CD4-positive, alpha-beta memory T cell (primary cell): ENCODE measurements at regions of chrX and their contacts with region 1.

Region 1: DNA sequence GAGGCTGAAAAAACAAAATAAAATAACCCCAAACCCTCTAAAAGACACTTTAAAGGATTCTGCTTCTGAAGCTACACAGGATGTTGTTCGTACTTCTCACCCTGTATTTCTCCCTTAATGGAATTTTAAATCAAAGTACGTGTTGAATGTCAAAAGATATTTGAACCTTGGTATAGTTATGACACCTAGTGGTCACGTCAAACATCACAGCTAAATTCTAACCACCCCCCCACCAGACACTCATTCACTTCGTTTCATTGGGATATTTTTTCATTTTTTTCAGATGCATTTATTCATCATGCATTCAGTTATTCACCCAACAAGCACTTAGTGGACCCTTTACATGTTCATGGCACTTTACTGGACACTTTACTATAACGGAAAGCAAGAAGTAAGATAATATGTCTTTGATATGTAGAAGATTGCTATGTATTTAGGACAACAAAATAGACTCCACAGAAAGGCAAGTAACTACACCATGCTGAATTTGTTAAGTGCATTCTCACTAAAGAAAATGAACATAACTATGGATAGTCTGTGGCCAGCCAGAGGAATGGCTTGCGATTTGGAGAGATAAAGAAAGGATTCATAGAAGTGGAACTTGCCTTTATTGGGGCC is 62.5 kb upstream of the GPR174 start:
- DNase-seq: peak; percentile 43 to 72 (median 65)
- H3K4me3 ChIP-seq: peak overlapping the region; percentile 6 to 32
- H3K4me3 Mint-ChIP-seq: peak overlapping the region; percentile 51 to 82 (median 78)
- H3K27ac ChIP-seq: peak overlapping the region; percentile 31
- H3K27ac Mint-ChIP-seq: peak overlapping the region; percentile 77 to 94 (median 90)
- H3K4me1 ChIP-seq: peaks cover 40% of the 10 kb centered on the region
- H3K4me1 Mint-ChIP-seq: peaks cover 16 to 37% (median 25%) of the 10 kb centered on the region in 4 donors
- H3K27me3 ChIP-seq: no peaks in the 10 kb centered on the region
- H3K27me3 Mint-ChIP-seq: no peaks in the 10 kb centered on the region

Region 2: DNA sequence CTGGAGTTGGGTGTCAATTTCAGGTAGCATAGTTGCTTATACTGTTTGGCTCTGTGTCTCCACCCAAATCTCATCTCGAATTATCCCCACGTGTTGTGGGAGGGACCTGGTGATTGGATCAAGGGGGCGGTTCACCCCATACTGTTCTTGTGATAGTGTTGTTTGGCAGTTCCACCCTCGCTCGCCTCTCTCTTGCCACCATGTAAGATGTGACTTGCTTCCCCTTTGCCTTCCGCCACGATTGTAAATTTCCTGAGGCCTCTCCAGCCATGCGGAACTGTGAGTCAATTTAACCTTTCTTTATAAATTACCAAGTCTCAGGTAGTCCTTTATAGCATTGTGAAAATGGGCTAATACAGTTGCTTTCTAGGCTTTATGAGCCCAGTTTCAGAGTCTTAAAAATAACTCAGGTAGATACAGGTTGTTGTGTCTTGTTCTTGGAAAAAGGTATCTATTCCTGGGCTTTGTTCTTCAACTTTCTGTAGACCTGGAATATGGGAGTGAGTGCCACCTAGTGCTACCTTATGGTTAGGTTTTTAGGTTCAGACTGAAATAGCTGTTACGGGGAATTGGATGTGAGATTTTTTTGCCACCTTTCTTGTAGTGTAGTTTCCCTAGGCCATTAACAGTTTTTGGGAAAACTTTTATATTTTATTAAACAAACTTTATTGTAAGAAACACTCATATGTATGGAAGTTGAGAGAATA is 962.3 kb before region 1 on chrX:
- CTCF ChIA-PET with region 1: no interaction called
- POLR2A ChIA-PET with region 1: no interaction called
- intact Hi-C with region 1: loop called (anchors 5 kb)
- DNase-seq: no peak
- H3K4me3 ChIP-seq: no peak overlapping the region
- H3K4me3 Mint-ChIP-seq: peak overlapping the region in 1 of 8 donors; percentile 24
- H3K27ac ChIP-seq: no peak overlapping the region
- H3K27ac Mint-ChIP-seq: peak overlapping the region in 6 of 7 donors; percentile 24 to 72 (median 40)
- H3K4me1 ChIP-seq: peaks cover 32% of the 10 kb centered on the region
- H3K4me1 Mint-ChIP-seq: peaks cover 11 to 44% (median 29%) of the 10 kb centered on the region in 4 donors
- H3K27me3 ChIP-seq: no peaks in the 10 kb centered on the region
- H3K27me3 Mint-ChIP-seq: no peaks in the 10 kb centered on the region

Region 3: DNA sequence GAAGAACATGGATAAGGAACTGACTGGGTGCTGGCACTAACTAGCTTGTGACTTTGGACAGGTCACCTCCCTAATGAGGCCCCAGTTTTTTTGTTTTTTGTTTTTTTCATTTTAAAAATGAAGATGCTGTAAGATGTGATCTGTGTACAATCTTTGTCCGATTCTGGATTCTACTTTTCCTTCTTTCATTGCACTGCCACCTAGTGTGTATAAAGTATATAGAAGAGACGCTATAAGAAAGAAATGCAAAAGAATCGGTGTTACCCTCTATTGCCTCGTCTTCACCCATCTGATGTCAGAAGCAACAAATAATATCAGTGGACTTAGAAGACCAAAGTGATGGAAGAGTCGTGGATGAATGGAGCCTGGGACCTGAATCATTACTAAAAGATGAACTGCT is 195.5 kb before region 1 on chrX:
- CTCF ChIA-PET with region 1: interaction called, 4 read pairs
- POLR2A ChIA-PET with region 1: no interaction called
- intact Hi-C with region 1: loop called (anchors 1 kb)
- DNase-seq: peak in 4 of 5 donors; percentile 5 to 27 (median 10)
- H3K4me3 ChIP-seq: no peak overlapping the region
- H3K4me3 Mint-ChIP-seq: peak overlapping the region in 1 of 8 donors; percentile 50
- H3K27ac ChIP-seq: no peak overlapping the region
- H3K27ac Mint-ChIP-seq: peak overlapping the region in 2 of 7 donors; percentile 43 to 59
- H3K4me1 ChIP-seq: no peaks in the 10 kb centered on the region
- H3K4me1 Mint-ChIP-seq: peaks cover 4 to 10% (median 6%) of the 10 kb centered on the region in 4 donors
- H3K27me3 ChIP-seq: no peaks in the 10 kb centered on the region
- H3K27me3 Mint-ChIP-seq: no peaks in the 10 kb centered on the region

Region 4: DNA sequence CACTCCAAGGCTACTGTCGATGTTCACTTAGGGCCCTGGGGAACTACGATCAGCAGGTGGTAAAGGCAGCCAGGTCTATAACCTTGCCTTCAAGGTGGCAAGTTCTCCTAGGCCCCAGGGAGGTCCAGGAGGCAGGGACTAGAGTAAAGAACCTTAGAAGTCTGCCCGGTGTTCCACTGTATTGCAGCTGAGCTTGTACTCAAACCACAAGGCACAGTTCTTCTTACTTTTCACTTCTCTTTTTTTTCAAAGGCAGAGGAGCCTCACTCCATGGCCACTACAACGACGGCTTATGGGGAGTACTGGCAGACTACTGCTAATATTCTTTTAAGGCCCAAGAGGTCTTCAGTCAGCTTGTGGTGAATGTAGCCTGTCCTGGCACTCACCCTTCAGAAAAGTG is 16.3 kb before region 1 on chrX:
- CTCF ChIA-PET with region 1: no interaction called
- POLR2A ChIA-PET with region 1: no interaction called
- intact Hi-C with region 1: no loop called
- DNase-seq: no peak
- H3K4me3 ChIP-seq: no peak overlapping the region
- H3K4me3 Mint-ChIP-seq: no peak overlapping the region
- H3K27ac ChIP-seq: no peak overlapping the region
- H3K27ac Mint-ChIP-seq: no peak overlapping the region
- H3K4me1 ChIP-seq: no peaks in the 10 kb centered on the region
- H3K4me1 Mint-ChIP-seq: no peaks in the 10 kb centered on the region
- H3K27me3 ChIP-seq: no peaks in the 10 kb centered on the region
- H3K27me3 Mint-ChIP-seq: no peaks in the 10 kb centered on the region

Region 5: DNA sequence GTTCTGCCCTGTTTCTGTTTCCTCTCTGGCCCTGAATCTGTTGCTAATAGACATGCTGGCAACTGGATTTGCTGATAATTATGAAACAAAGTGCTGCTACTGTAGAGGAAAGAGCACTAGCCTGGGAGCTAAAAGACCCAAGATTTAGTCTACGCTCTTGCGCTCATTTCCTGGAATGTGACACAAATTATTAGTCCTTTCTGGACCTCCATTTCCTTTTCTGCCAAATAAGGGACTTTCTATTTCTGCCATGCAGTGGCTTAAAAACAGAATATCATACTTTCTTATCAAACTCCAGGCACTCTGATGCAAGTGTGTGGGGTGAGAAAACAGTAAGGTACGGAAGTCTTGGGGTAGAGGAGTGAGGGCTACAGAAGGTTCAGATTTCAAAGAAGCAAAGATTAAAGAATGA is 14.1 kb after region 1 on chrX:
- CTCF ChIA-PET with region 1: interaction called, 4 read pairs
- POLR2A ChIA-PET with region 1: interaction called, 14 read pairs
- intact Hi-C with region 1: no loop called
- DNase-seq: peak in 3 of 5 donors; percentile 41 to 45 (median 42)
- H3K4me3 ChIP-seq: peak overlapping the region; percentile 17 to 33
- H3K4me3 Mint-ChIP-seq: peak overlapping the region; percentile 31 to 84 (median 56)
- H3K27ac ChIP-seq: peak overlapping the region; percentile 68
- H3K27ac Mint-ChIP-seq: peak overlapping the region; percentile 83 to 96 (median 91)
- H3K4me1 ChIP-seq: peaks cover 69% of the 10 kb centered on the region
- H3K4me1 Mint-ChIP-seq: peaks cover 31 to 70% (median 52%) of the 10 kb centered on the region in 4 donors
- H3K27me3 ChIP-seq: no peaks in the 10 kb centered on the region
- H3K27me3 Mint-ChIP-seq: no peaks in the 10 kb centered on the region

Region 6: DNA sequence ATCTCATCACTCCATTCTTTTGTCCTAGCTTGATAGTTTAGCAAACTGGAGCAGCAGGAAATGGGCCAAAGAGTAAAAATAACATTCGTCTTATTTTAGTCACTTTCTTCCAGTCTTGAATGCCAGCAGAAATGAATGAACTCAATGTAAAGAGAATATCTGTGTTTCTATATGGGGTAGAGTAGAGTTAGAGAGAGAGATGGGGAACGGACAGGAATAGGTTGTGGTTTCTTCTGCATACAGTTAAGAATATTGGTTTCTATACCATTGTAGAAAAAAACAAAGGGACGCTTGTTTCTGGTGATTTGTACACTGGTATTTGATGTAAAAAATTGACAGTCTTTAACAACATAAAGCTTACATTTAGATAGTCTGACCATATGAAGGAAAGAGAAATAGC is 71.3 kb after region 1 on chrX:
- CTCF ChIA-PET with region 1: interaction called, 7 read pairs
- POLR2A ChIA-PET with region 1: interaction called, 10 read pairs
- intact Hi-C with region 1: no loop called
- DNase-seq: no peak
- H3K4me3 ChIP-seq: peak overlapping the region; percentile 34 to 42
- H3K4me3 Mint-ChIP-seq: peak overlapping the region; percentile 57 to 93 (median 84)
- H3K27ac ChIP-seq: peak overlapping the region; percentile 71
- H3K27ac Mint-ChIP-seq: peak overlapping the region; percentile 83 to 97 (median 93)
- H3K4me1 ChIP-seq: peaks cover 94% of the 10 kb centered on the region
- H3K4me1 Mint-ChIP-seq: peaks cover 34 to 81% (median 42%) of the 10 kb centered on the region in 4 donors
- H3K27me3 ChIP-seq: no peaks in the 10 kb centered on the region
- H3K27me3 Mint-ChIP-seq: no peaks in the 10 kb centered on the region